MCF 10A (cell line): ENCODE measurements at regions of chr3 and their contacts with region 1.

Region 1: DNA sequence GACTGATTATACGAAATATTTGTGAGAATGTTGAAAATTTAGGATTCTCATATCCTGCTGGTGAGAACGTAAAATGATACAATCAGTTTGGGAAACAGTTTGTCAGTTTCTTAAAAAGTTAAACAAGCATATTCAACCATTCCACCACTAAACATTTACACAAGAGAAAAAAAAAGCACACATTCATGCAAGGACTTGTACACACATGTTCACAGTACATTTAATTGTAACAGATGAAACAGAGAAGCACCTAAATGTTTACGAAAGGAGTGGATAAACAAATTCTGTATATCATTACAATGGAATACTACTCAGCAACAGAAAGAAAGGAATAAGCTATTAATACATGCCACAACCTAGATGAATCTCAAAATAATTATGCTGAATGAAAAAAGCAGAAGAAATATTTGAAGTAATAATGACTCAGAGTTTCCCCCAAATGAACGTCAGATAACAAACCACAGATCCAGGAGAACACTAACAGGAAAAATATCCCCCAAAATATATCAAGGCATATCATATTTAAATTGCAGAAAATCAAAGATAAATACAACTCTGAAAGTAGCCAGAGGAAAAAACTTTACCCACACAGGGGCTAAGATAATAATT is 14.3 kb downstream of the ANKRD28 start:
- DNase-seq: no peak
- H3K4me3 Mint-ChIP-seq: peak overlapping the region; percentile 60
- H3K27ac Mint-ChIP-seq: peak overlapping the region; percentile 94
- H3K4me1 Mint-ChIP-seq: peaks cover 62% of the 10 kb centered on the region
- H3K27me3 Mint-ChIP-seq: no peaks in the 10 kb centered on the region
- CTCF ChIP-seq: no peak

Region 2: GRCh38 chr3:15768421-15769255 is 14.8 kb before region 1 on chr3:
- CTCF ChIA-PET with region 1: interaction called, 6 read pairs
- POLR2A ChIA-PET with region 1: interaction called, 37 read pairs
- intact Hi-C with region 1: no loop called
- DNase-seq: peak; percentile 96
- H3K4me3 Mint-ChIP-seq: peak overlapping the region; percentile 28
- H3K27ac Mint-ChIP-seq: peak overlapping the region; percentile 81
- H3K4me1 Mint-ChIP-seq: peaks cover 24% of the 10 kb centered on the region
- H3K27me3 Mint-ChIP-seq: no peaks in the 10 kb centered on the region
- CTCF ChIP-seq: no peak

Region 3: GRCh38 chr3:15805756-15806266 is 22.3 kb after region 1 on chr3:
- CTCF ChIA-PET with region 1: interaction called, 4 read pairs
- POLR2A ChIA-PET with region 1: interaction called, 293 read pairs
- intact Hi-C with region 1: no loop called
- DNase-seq: peak; percentile 75
- H3K4me3 Mint-ChIP-seq: no peak overlapping the region
- H3K27ac Mint-ChIP-seq: peak overlapping the region; percentile 81
- H3K4me1 Mint-ChIP-seq: peaks cover 23% of the 10 kb centered on the region
- H3K27me3 Mint-ChIP-seq: no peaks in the 10 kb centered on the region
- CTCF ChIP-seq: no peak

Region 4: DNA sequence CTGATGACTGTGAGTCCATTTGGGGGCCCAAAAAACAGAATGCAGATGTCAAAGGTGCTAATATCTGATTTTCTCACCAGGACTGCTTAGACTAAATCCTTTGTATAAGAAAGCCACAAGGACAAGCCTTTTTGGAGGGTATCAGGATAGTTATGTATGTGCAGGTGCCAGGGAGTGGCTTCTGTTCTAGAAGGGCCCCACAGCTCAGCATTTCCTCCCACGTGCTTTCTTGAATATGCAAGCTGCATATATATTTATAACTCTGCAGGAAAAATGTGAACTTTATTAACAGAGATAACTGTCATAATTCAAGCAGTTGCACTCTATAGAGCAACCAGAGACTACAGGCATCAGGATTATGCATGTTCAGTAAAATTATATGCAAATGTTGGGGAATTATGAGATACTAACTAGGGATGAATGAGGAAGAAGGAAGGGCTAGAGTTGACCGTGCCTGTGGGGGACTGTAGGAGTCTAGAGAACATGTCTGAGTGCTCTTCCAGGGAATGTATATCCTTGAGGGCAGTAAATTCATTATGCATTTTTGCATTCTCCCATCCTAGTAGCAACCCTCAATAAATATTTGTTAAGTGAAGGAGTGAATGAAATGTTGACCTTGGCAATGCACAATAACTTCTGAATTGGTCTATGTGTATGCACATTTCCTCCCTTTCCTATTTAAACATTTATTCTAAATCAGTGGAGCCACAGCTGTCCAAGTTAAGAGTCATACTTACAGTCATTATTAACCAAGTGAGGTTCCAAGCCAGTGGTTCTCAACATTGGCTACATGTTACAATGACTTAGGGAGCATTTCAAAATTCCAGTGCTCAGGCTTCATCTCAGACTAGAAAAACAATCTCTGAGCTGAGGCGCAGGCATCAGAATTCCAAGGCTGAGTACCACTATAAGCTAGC is 109.1 kb after region 1 on chr3:
- CTCF ChIA-PET with region 1: no interaction called
- POLR2A ChIA-PET with region 1: no interaction called
- intact Hi-C with region 1: no loop called
- DNase-seq: no peak
- H3K4me3 Mint-ChIP-seq: no peak overlapping the region
- H3K27ac Mint-ChIP-seq: peak overlapping the region; percentile 84
- H3K4me1 Mint-ChIP-seq: peaks cover 8% of the 10 kb centered on the region
- H3K27me3 Mint-ChIP-seq: no peaks in the 10 kb centered on the region
- CTCF ChIP-seq: no peak